ENCODE measurements at regions of chr1 and their contacts with region 1.

Region 1: GRCh38 chr1:161117759-161118581 is at the starts of genes NIT1 and PFDN2:
- DNase-seq: peak; percentile 77
- ATAC-seq: peak; percentile 69
- H3K4me3 ChIP-seq: peak within 1 kb of the TSS; percentile 68 to 98
- H3K27ac ChIP-seq: peak within 1 kb of the TSS; percentile 91
- H3K4me1 ChIP-seq: peaks cover 34 to 61% of the 10 kb centered on the region in 2 experiments
- H3K27me3 ChIP-seq: no peaks in the 10 kb centered on the region
- CTCF ChIP-seq: no peak
- POLR2A ChIP-seq: peak; percentile 65
- RAD21 ChIP-seq: no peak
- total RNA-seq, gene NIT1: 65.9 TPM
- total RNA-seq, gene PFDN2: 179 TPM

Region 2: GRCh38 chr1:160997323-160998038 is 120.5 kb before region 1 on chr1:
- CTCF ChIA-PET with region 1: no interaction called
- POLR2A ChIA-PET with region 1: no interaction called
- RAD21 ChIA-PET with region 1: no interaction called
- intact Hi-C with region 1: loop called (anchors 5 kb)
- DNase-seq: peak; percentile 51
- ATAC-seq: peak; percentile 71
- H3K4me3 ChIP-seq: no peak overlapping the region
- H3K27ac ChIP-seq: peak overlapping the region; percentile 61
- H3K4me1 ChIP-seq: peaks cover 30 to 60% of the 10 kb centered on the region in 2 experiments
- H3K27me3 ChIP-seq: no peaks in the 10 kb centered on the region
- CTCF ChIP-seq: peak; percentile 58 to 75 (median 73); a peak in 5 of 6 replicates
- POLR2A ChIP-seq: no peak
- RAD21 ChIP-seq: peak; percentile 75

Region 3: GRCh38 chr1:161021165-161021960 is 96.6 kb before region 1 on chr1:
- CTCF ChIA-PET with region 1: no interaction called
- POLR2A ChIA-PET with region 1: interaction called, 9 read pairs
- RAD21 ChIA-PET with region 1: no interaction called
- intact Hi-C with region 1: loop called (anchors 1 kb)
- DNase-seq: peak; percentile 99
- ATAC-seq: peak; percentile 96
- H3K4me3 ChIP-seq: peak overlapping the region; percentile 96 to 97
- H3K27ac ChIP-seq: peak overlapping the region; percentile 68
- H3K4me1 ChIP-seq: peaks cover 18 to 49% of the 10 kb centered on the region in 2 experiments
- H3K27me3 ChIP-seq: no peaks in the 10 kb centered on the region
- CTCF ChIP-seq: no peak
- POLR2A ChIP-seq: peak; percentile 41
- RAD21 ChIP-seq: no peak

Region 4: GRCh38 chr1:161045750-161046571 is 72.0 kb before region 1 on chr1 and contains the start of gene USF1:
- CTCF ChIA-PET with region 1: no interaction called
- POLR2A ChIA-PET with region 1: interaction called, 8 read pairs
- RAD21 ChIA-PET with region 1: no interaction called
- intact Hi-C with region 1: loop called (anchors 5 kb)
- DNase-seq: peak; percentile 90
- ATAC-seq: peak; percentile 81
- H3K4me3 ChIP-seq: peak within 1 kb of the TSS; percentile 66 to 70
- H3K27ac ChIP-seq: peak within 1 kb of the TSS; percentile 85
- H3K4me1 ChIP-seq: peaks cover 5 to 17% of the 10 kb centered on the region in 2 experiments; a peak in 2 of 4 replicates
- H3K27me3 ChIP-seq: no peaks in the 10 kb centered on the region
- CTCF ChIP-seq: no peak
- POLR2A ChIP-seq: no peak
- RAD21 ChIP-seq: no peak
- total RNA-seq, gene USF1: 48.0 TPM

Region 5: DNA sequence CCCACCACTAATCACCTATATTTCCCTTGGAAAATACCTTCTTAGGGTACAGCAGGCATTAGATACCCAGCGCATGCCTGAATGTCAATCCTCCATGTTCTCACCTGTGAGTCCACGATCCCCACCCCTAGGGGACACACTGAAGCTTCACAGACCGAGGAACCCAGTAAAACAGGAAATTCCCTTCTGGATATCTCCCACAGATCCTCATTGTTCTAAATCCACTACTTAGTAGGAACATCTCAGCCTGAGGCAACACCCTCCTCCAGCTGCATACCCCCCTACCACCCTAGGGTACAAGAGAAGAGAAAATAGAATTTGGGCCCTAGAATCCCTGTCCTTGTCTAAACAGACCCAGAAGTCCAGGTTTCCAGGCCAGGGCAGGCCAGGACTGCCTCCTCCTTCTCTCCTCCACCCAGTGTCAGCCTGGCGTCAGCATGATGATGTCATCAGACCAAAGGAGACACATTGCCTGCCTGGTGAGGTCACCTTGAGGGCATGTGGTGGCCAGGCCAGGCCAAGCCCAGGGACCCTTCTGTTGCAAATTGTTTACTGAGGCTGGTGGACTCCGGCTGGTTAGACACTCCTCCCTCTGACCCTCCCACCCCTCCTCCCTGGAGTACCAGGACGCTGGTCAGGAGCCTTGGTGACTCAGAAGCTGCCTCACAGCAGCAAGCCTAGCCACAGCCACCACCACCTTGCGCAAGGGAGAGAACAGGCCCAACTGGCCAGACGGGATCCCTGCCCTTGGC is 34.8 kb before region 1 on chr1:
- CTCF ChIA-PET with region 1: no interaction called
- POLR2A ChIA-PET with region 1: interaction called, 3 read pairs
- RAD21 ChIA-PET with region 1: no interaction called
- intact Hi-C with region 1: loop called (anchors 1 kb)
- DNase-seq: peak; percentile 89
- ATAC-seq: peak; percentile 94
- H3K4me3 ChIP-seq: peak overlapping the region; percentile 11 to 40; a peak in 3 of 4 replicates
- H3K27ac ChIP-seq: peak overlapping the region; percentile 46
- H3K4me1 ChIP-seq: peaks cover 34 to 78% of the 10 kb centered on the region in 2 experiments
- H3K27me3 ChIP-seq: no peaks in the 10 kb centered on the region
- CTCF ChIP-seq: no peak
- POLR2A ChIP-seq: no peak
- RAD21 ChIP-seq: no peak

Region 6: GRCh38 chr1:161094481-161094880 is 23.5 kb before region 1 on chr1:
- CTCF ChIA-PET with region 1: no interaction called
- POLR2A ChIA-PET with region 1: no interaction called
- RAD21 ChIA-PET with region 1: no interaction called
- intact Hi-C with region 1: no loop called
- DNase-seq: no peak
- ATAC-seq: no peak
- H3K4me3 ChIP-seq: no peak overlapping the region
- H3K27ac ChIP-seq: no peak overlapping the region
- H3K4me1 ChIP-seq: peaks cover 10 to 53% of the 10 kb centered on the region in 2 experiments
- H3K27me3 ChIP-seq: no peaks in the 10 kb centered on the region
- CTCF ChIP-seq: no peak
- POLR2A ChIP-seq: no peak
- RAD21 ChIP-seq: no peak

Region 7: GRCh38 chr1:161132410-161133219 is 14.6 kb after region 1 on chr1 and contains the start of gene DEDD:
- CTCF ChIA-PET with region 1: interaction called, 3 read pairs
- POLR2A ChIA-PET with region 1: interaction called, 16 read pairs
- RAD21 ChIA-PET with region 1: interaction called in 1 of 2 experiments, 3 read pairs
- intact Hi-C with region 1: loop called (anchors 2 kb)
- DNase-seq: peak; percentile 98
- ATAC-seq: peak; percentile 86
- H3K4me3 ChIP-seq: peak within 1 kb of the TSS; percentile 81 to 85
- H3K27ac ChIP-seq: peak within 1 kb of the TSS; percentile 91
- H3K4me1 ChIP-seq: peaks cover 10 to 20% of the 10 kb centered on the region in 2 experiments; a peak in 3 of 4 replicates
- H3K27me3 ChIP-seq: no peaks in the 10 kb centered on the region
- CTCF ChIP-seq: no peak
- POLR2A ChIP-seq: peak; percentile 31
- RAD21 ChIP-seq: no peak
- total RNA-seq, gene DEDD: 32.8 TPM

Region 8: DNA sequence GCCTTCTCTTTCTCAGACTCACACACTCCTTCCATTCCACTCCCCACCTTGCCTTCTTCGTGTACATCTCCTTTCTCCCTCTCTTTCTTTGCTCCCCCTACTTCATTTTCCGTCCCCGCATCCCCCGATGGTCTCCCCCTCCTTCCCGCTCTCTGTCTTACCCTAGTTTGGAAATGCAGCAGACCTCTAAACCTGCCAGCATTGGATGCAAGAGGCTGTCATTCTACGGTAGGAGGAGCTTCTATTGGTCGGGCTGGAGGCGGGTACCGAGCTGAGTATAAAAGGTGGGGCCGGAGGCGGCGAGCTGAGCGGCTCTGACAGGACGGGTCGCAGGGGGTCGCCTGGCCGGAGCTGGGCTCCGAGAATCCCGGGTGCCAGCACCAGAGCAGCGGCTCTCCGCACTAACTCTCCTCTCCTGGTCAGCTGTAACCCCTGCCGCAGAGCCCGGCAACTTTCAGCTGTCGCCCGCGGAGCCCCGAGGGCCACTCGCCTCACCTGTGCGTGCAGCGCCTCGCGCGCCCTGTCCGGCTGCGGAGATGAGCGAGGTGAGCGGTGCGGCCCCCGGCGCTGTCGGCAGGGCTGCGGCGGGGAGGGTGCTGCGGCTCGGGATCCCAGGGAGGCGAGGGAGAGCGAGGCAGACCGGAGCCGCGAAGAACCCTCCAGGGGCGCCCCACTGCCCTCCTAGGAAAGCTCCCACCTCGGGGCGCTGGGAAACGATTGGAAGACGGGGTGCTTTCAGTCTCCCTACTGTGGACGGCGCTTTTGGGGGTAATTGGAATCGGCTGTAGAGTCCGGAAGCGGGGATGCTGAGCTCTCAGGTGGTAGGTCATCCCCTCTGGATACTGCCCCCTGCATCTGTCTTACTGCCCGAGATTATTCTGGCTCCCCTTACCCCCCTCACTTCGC is 140.7 kb after region 1 on chr1 and contains the start of gene PCP4L1:
- CTCF ChIA-PET with region 1: no interaction called
- POLR2A ChIA-PET with region 1: no interaction called
- RAD21 ChIA-PET with region 1: no interaction called
- intact Hi-C with region 1: no loop called
- DNase-seq: no peak
- ATAC-seq: no peak
- H3K4me3 ChIP-seq: no peak within 1 kb of the TSS
- H3K27ac ChIP-seq: no peak within 1 kb of the TSS
- H3K4me1 ChIP-seq: no peaks in the 10 kb centered on the region
- H3K27me3 ChIP-seq: peaks cover 14% of the 10 kb centered on the region
- CTCF ChIP-seq: no peak
- POLR2A ChIP-seq: no peak
- RAD21 ChIP-seq: no peak
- total RNA-seq, gene PCP4L1: not detected

Region 9: DNA sequence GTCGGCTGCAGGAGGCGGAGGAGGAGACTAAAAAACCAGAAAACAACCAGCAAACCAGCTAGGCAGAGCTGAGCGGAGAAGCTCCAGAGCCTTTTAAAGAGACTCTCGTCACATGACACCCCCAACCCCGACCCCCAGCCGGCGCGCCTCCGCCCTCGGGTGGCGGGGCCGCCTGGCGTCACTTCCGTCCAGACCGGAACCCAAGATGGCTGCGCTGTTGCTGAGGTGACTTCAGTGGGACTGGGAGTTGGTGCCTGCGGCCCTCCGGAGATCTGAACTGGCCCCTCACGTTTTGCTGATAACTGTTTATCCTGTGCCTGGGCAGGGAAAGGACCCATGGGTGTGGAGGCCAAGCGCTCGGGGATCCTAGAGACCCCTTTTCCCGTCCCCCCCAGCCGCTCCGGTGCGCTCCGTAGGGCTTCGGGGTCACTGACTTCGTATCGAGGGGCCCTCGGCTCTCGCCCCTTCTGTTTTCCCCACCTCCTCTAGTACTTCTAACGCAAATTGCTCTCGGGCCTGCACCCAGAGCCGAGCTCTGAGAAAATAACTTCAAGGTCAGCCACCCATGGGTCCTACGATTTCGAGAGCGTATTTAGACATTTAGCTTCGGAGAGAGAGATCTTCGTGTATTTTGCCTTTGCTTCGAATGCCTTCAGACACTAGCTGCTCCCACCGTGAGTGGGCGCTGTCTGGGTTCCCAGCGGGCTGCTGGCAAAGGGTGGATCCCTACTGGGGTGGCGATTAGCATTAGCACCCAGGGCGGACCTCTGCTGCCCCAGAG is 196.4 kb after region 1 on chr1 and contains the start of gene SDHC:
- CTCF ChIA-PET with region 1: no interaction called
- POLR2A ChIA-PET with region 1: no interaction called
- RAD21 ChIA-PET with region 1: no interaction called
- intact Hi-C with region 1: no loop called
- DNase-seq: peak; percentile 54
- ATAC-seq: peak; percentile 93
- H3K4me3 ChIP-seq: peak within 1 kb of the TSS; percentile 86 to 97
- H3K27ac ChIP-seq: peak within 1 kb of the TSS; percentile 76
- H3K4me1 ChIP-seq: peaks cover 7 to 14% of the 10 kb centered on the region in 2 experiments
- H3K27me3 ChIP-seq: no peaks in the 10 kb centered on the region
- CTCF ChIP-seq: peak in 2 of 3 experiments; percentile 38 to 45; a peak in 3 of 6 replicates
- POLR2A ChIP-seq: peak; percentile 84
- RAD21 ChIP-seq: no peak
- total RNA-seq, gene SDHC: 192 TPM

Region 10: GRCh38 chr1:161382214-161383019 is 264.4 kb after region 1 on chr1:
- CTCF ChIA-PET with region 1: no interaction called
- POLR2A ChIA-PET with region 1: no interaction called
- RAD21 ChIA-PET with region 1: no interaction called
- intact Hi-C with region 1: loop called (anchors 5 kb)
- DNase-seq: peak; percentile 45
- ATAC-seq: peak; percentile 86
- H3K4me3 ChIP-seq: no peak overlapping the region
- H3K27ac ChIP-seq: no peak overlapping the region
- H3K4me1 ChIP-seq: peaks cover 5 to 14% of the 10 kb centered on the region in 2 experiments; a peak in 3 of 4 replicates
- H3K27me3 ChIP-seq: no peaks in the 10 kb centered on the region
- CTCF ChIP-seq: peak; percentile 56 to 85 (median 72)
- POLR2A ChIP-seq: no peak
- RAD21 ChIP-seq: peak; percentile 84